B cell (primary cell): ENCODE measurements at regions of chr2 and their contacts with region 1.

Region 1: GRCh38 chr2:24409700-24410556 is 49.6 kb upstream of the ITSN2 start:
- DNase-seq: peak; percentile 77
- ATAC-seq: peak; percentile 66
- H3K4me3 ChIP-seq: no peak overlapping the region
- H3K4me3 Mint-ChIP-seq: no peak overlapping the region
- H3K27ac ChIP-seq: no peak overlapping the region
- H3K27ac Mint-ChIP-seq: no peak overlapping the region
- H3K4me1 ChIP-seq: no peaks in the 10 kb centered on the region
- H3K4me1 Mint-ChIP-seq: no peaks in the 10 kb centered on the region
- H3K27me3 ChIP-seq: peaks cover 0 to 5% (median 3%) of the 10 kb centered on the region in 4 experiments
- H3K27me3 Mint-ChIP-seq: peaks cover 15% of the 10 kb centered on the region
- CTCF ChIP-seq: peak; percentile 95

Region 2: DNA sequence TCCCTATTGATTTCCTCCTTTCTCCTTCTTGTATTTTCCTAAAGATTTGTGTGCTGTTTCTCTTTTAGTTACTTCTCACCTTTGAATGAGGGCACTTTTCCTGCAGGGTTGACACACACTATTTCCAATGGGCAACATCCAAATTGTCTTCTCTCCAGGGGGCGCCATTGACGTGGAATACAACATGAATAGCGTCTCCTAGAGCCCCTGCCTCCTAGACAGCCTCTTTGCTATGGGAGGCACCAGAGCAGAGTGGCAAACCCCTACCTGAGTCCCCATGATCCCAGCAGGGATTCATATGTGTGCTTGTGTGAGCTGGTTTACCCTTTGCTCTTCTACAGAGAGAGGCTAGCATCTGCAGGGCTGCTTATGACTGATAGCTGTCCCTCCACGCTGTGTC is 11.7 kb after region 1 on chr2:
- CTCF ChIA-PET with region 1: interaction called, 28 read pairs
- POLR2A ChIA-PET with region 1: no interaction called
- intact Hi-C with region 1: no loop called
- DNase-seq: peak; percentile 54
- ATAC-seq: no peak
- H3K4me3 ChIP-seq: no peak overlapping the region
- H3K4me3 Mint-ChIP-seq: no peak overlapping the region
- H3K27ac ChIP-seq: no peak overlapping the region
- H3K27ac Mint-ChIP-seq: no peak overlapping the region
- H3K4me1 ChIP-seq: no peaks in the 10 kb centered on the region
- H3K4me1 Mint-ChIP-seq: no peaks in the 10 kb centered on the region
- H3K27me3 ChIP-seq: no peaks in the 10 kb centered on the region
- H3K27me3 Mint-ChIP-seq: no peaks in the 10 kb centered on the region
- CTCF ChIP-seq: peak; percentile 52

Region 3: DNA sequence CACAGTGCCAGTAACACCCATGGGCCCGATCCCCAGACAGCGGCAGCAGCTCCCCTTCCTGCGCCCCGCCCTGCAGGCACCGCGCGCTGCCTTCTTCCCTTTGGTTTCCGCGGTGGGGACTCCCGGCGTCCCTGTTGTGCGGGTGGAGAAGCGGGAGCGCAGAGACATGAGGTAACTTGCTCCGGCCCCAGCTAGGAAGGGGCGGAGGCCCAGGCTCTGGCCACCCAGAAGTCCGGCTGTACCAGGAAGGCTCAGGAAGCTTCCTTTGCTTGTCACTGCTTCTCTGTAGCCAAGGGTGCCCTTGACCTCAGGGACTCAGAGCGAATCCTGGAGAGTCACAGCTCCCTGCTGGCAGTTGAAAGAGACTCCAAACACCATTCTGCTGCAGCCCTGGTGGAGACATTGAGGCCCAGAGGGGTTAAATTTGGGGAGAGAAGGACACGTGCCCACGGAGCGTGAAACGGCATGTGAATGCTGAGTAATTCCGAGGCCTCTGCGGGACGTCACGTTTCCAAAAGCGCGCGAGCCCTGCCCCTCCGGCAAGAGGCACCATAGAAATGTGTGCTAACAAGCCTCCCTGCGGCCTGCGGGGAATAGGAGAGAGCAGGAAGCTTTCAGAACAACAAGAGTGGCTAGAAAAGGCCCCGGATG is 516.8 kb after region 1 on chr2:
- CTCF ChIA-PET with region 1: no interaction called
- POLR2A ChIA-PET with region 1: no interaction called
- intact Hi-C with region 1: loop called (anchors 5 kb)
- DNase-seq: no peak
- ATAC-seq: no peak
- H3K4me3 ChIP-seq: peak overlapping the region in 3 of 5 experiments; percentile 21 to 42 (median 28)
- H3K4me3 Mint-ChIP-seq: peak overlapping the region; percentile 66
- H3K27ac ChIP-seq: no peak overlapping the region
- H3K27ac Mint-ChIP-seq: no peak overlapping the region
- H3K4me1 ChIP-seq: peaks cover 7 to 18% of the 10 kb centered on the region in 2 donors
- H3K4me1 Mint-ChIP-seq: peaks cover 15% of the 10 kb centered on the region
- H3K27me3 ChIP-seq: peaks cover 0 to 13% (median 7%) of the 10 kb centered on the region in 4 experiments
- H3K27me3 Mint-ChIP-seq: peaks cover 3% of the 10 kb centered on the region
- CTCF ChIP-seq: no peak

Region 4: GRCh38 chr2:25197336-25198208 is 787.6 kb after region 1 on chr2:
- CTCF ChIA-PET with region 1: interaction called, 3 read pairs
- POLR2A ChIA-PET with region 1: no interaction called
- intact Hi-C with region 1: loop called (anchors 2 kb)
- DNase-seq: no peak
- ATAC-seq: no peak
- H3K4me3 ChIP-seq: no peak overlapping the region
- H3K4me3 Mint-ChIP-seq: no peak overlapping the region
- H3K27ac ChIP-seq: no peak overlapping the region
- H3K27ac Mint-ChIP-seq: no peak overlapping the region
- H3K4me1 ChIP-seq: peaks cover 6 to 14% of the 10 kb centered on the region in 2 donors
- H3K4me1 Mint-ChIP-seq: peaks cover 14% of the 10 kb centered on the region
- H3K27me3 ChIP-seq: peaks cover 0 to 6% (median 1%) of the 10 kb centered on the region in 4 experiments
- H3K27me3 Mint-ChIP-seq: no peaks in the 10 kb centered on the region
- CTCF ChIP-seq: no peak